Caco-2 (cell line): ENCODE measurements at regions of chr10 and their contacts with region 1.

Region 1: GRCh38 chr10:71212318-71213126 is at the start of gene UNC5B:
- DNase-seq: peak; percentile 94 to 99
- H3K4me3 ChIP-seq: peak within 1 kb of the TSS; percentile 66
- H3K4me3 Mint-ChIP-seq: peak within 1 kb of the TSS; percentile 81
- H3K27ac Mint-ChIP-seq: no peak within 1 kb of the TSS
- H3K4me1 ChIP-seq: peaks cover 27% of the 10 kb centered on the region
- H3K4me1 Mint-ChIP-seq: peaks cover 16% of the 10 kb centered on the region
- H3K27me3 ChIP-seq: peaks cover 17% of the 10 kb centered on the region
- H3K27me3 Mint-ChIP-seq: peaks cover 25% of the 10 kb centered on the region
- CTCF ChIP-seq: peak; percentile 55 to 62
- total RNA-seq, gene UNC5B: 16.2 and 22.4 TPM in 2 replicates

Region 2: GRCh38 chr10:70903262-70903921 is 309.1 kb before region 1 on chr10:
- CTCF ChIA-PET with region 1: no interaction called
- POLR2A ChIA-PET with region 1: no interaction called
- intact Hi-C with region 1: loop called (anchors 1 kb)
- DNase-seq: peak; percentile 71 to 79
- H3K4me3 ChIP-seq: no peak overlapping the region
- H3K4me3 Mint-ChIP-seq: no peak overlapping the region
- H3K27ac Mint-ChIP-seq: no peak overlapping the region
- H3K4me1 ChIP-seq: peaks cover 8% of the 10 kb centered on the region
- H3K4me1 Mint-ChIP-seq: no peaks in the 10 kb centered on the region
- H3K27me3 ChIP-seq: no peaks in the 10 kb centered on the region; the same call in 1 of the 2 replicates
- H3K27me3 Mint-ChIP-seq: peaks cover 3% of the 10 kb centered on the region
- CTCF ChIP-seq: peak; percentile 97 to 98

Region 3: GRCh38 chr10:71010730-71011129 is 201.8 kb before region 1 on chr10:
- CTCF ChIA-PET with region 1: interaction called, 3 read pairs
- POLR2A ChIA-PET with region 1: no interaction called
- intact Hi-C with region 1: loop called (anchors 2 kb)
- DNase-seq: no peak
- H3K4me3 ChIP-seq: no peak overlapping the region
- H3K4me3 Mint-ChIP-seq: no peak overlapping the region
- H3K27ac Mint-ChIP-seq: no peak overlapping the region
- H3K4me1 ChIP-seq: no peaks in the 10 kb centered on the region
- H3K4me1 Mint-ChIP-seq: no peaks in the 10 kb centered on the region
- H3K27me3 ChIP-seq: no peaks in the 10 kb centered on the region; the same call in 1 of the 2 replicates
- H3K27me3 Mint-ChIP-seq: peaks cover 21% of the 10 kb centered on the region
- CTCF ChIP-seq: peak in 1 of 2 experiments; percentile 32

Region 4: DNA sequence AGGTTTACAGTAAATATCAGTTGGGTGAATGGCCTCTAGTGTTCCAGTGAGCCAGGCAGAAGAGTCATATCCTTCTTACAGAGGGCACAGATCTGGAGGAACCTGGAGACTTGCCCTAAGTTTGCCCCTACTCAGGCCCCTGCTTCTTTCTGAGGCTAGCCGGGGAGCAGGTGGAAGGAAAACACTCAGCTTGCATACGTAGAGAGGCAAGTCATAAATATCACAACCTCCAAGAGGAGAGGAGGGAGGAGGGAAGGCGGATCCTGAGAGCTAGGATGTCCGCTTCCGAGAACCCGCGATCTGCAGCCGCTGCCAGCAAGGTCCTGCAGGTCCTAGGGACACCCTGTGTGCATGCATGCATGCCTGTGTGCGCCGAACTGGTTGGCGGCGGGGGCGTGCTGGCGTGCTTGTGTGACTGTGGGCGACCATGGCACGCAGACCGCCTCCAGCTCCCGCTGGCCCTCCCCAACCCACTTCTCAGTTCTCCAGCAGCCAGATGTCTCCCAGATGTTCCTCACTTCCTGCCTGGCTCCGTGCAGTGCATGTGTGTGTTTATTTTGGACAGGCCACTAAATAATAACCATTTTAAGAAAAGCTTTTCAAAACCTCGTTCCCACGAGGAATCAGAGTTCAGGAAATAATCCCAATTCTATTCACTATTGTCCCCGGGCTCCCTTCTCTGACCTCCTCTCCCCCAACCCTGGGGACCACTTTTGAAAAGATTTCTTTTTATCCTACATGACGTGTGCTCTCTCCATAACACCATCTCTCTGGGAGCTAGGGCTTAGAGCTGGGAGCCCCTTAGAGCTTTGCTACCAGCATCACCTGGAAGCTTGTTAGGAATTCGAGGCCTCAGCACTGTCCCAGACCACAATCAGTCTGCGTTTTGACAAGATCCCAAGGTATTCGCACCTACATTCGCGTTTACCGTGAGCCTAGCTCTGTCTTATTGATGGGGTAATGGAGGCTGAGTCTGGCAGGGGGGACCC is 32.2 kb after region 1 on chr10:
- CTCF ChIA-PET with region 1: interaction called, 9 read pairs
- POLR2A ChIA-PET with region 1: no interaction called
- intact Hi-C with region 1: loop called (anchors 1 kb)
- DNase-seq: no peak
- H3K4me3 ChIP-seq: no peak overlapping the region
- H3K4me3 Mint-ChIP-seq: no peak overlapping the region
- H3K27ac Mint-ChIP-seq: peak overlapping the region; percentile 90
- H3K4me1 ChIP-seq: peaks cover 61% of the 10 kb centered on the region
- H3K4me1 Mint-ChIP-seq: peaks cover 40% of the 10 kb centered on the region
- H3K27me3 ChIP-seq: no peaks in the 10 kb centered on the region
- H3K27me3 Mint-ChIP-seq: no peaks in the 10 kb centered on the region
- CTCF ChIP-seq: no peak

Region 5: DNA sequence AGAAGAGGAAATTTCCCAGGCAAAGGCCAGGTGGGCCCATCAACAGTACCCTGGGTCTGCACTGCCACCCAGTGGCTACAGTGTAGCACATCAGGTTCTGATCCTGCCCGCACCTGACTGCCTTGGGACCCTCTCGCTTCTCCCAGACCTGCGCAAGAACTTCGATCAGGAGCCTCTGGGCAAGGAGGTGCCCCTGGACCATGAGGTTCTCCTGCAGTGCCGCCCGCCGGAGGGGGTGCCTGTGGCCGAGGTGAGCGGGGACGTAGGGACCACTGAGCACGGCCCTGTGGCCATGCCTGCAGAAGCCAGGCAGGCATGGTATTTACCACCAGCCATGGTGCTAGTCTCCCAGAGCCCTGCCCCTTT is 72.6 kb after region 1 on chr10:
- CTCF ChIA-PET with region 1: interaction called, 4 read pairs
- POLR2A ChIA-PET with region 1: no interaction called
- intact Hi-C with region 1: loop called (anchors 1 kb)
- DNase-seq: peak; percentile 74 to 80
- H3K4me3 ChIP-seq: no peak overlapping the region
- H3K4me3 Mint-ChIP-seq: no peak overlapping the region
- H3K27ac Mint-ChIP-seq: no peak overlapping the region
- H3K4me1 ChIP-seq: peaks cover 12% of the 10 kb centered on the region
- H3K4me1 Mint-ChIP-seq: peaks cover 3% of the 10 kb centered on the region
- H3K27me3 ChIP-seq: no peaks in the 10 kb centered on the region
- H3K27me3 Mint-ChIP-seq: no peaks in the 10 kb centered on the region
- CTCF ChIP-seq: peak; percentile 97